ENCODE measurements at regions of chr20 and their contacts with region 1.

Region 1: GRCh38 chr20:49278036-49278817 is at the start of gene ZNFX1:
- DNase-seq: peak; percentile 100
- H3K4me3 ChIP-seq: peak within 1 kb of the TSS; percentile 76
- H3K4me3 Mint-ChIP-seq: peak within 1 kb of the TSS; percentile 81
- H3K27ac Mint-ChIP-seq: peak within 1 kb of the TSS; percentile 97
- H3K4me1 ChIP-seq: peaks cover 44% of the 10 kb centered on the region
- H3K4me1 Mint-ChIP-seq: peaks cover 56% of the 10 kb centered on the region
- H3K27me3 ChIP-seq: no peaks in the 10 kb centered on the region
- H3K27me3 Mint-ChIP-seq: peaks cover 9% of the 10 kb centered on the region
- CTCF ChIP-seq: no peak
- total RNA-seq, gene ZNFX1: 34.0 and 34.7 TPM in 2 replicates

Region 2: DNA sequence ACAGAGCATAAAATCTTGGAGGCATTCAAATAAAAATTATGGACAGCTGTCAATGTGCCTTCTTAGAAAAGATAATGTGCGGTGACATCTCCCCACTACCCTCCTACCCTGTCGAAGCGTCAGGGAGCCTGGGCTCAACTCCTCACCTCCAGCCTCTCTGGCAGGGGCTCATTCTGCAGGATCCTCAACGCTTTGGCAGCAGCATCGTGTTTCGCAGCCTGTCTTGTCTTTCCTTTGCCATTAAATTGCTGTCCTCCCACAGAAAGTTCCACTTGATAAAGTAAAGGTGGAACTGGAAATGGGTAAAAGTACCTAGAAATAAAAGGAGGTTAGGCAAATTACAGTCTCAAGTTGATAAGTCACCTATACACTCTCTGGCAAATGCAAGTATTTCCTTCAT is 126.8 kb before region 1 on chr20:
- CTCF ChIA-PET with region 1: no interaction called
- POLR2A ChIA-PET with region 1: interaction called, 10 read pairs
- intact Hi-C with region 1: no loop called
- DNase-seq: no peak
- H3K4me3 ChIP-seq: no peak overlapping the region
- H3K4me3 Mint-ChIP-seq: no peak overlapping the region
- H3K27ac Mint-ChIP-seq: no peak overlapping the region
- H3K4me1 ChIP-seq: no peaks in the 10 kb centered on the region
- H3K4me1 Mint-ChIP-seq: no peaks in the 10 kb centered on the region
- H3K27me3 ChIP-seq: no peaks in the 10 kb centered on the region
- H3K27me3 Mint-ChIP-seq: no peaks in the 10 kb centered on the region
- CTCF ChIP-seq: no peak

Region 3: GRCh38 chr20:49245921-49246740 is 32.1 kb before region 1 on chr20:
- CTCF ChIA-PET with region 1: interaction called, 4 read pairs
- POLR2A ChIA-PET with region 1: interaction called, 5 read pairs
- intact Hi-C with region 1: loop called (anchors 1 kb)
- DNase-seq: peak in 1 of 2 experiments; percentile 74
- H3K4me3 ChIP-seq: no peak overlapping the region
- H3K4me3 Mint-ChIP-seq: no peak overlapping the region
- H3K27ac Mint-ChIP-seq: no peak overlapping the region
- H3K4me1 ChIP-seq: no peaks in the 10 kb centered on the region
- H3K4me1 Mint-ChIP-seq: no peaks in the 10 kb centered on the region
- H3K27me3 ChIP-seq: no peaks in the 10 kb centered on the region
- H3K27me3 Mint-ChIP-seq: no peaks in the 10 kb centered on the region
- CTCF ChIP-seq: peak; percentile 97

Region 4: DNA sequence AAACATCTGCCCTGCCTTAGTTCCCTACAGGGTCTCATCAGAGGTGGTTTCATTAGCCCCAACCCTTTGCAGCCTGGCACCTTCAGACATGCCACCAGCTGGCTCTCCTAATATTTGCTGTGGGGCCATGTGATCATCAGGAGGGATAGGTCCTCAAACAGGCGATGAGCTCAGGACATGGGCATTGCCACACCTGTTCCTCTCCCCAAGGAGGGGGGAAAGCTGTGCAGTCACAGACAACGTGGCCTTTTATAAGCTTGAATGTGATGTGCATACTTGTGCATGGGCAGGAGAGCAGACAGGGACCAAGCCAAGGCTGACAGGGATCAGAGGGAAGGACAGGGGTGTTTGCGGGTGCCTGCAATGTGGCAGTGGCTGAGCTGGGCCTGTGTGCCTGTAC is 78.4 kb after region 1 on chr20:
- CTCF ChIA-PET with region 1: no interaction called
- POLR2A ChIA-PET with region 1: no interaction called
- intact Hi-C with region 1: no loop called
- DNase-seq: no peak
- H3K4me3 ChIP-seq: no peak overlapping the region
- H3K4me3 Mint-ChIP-seq: no peak overlapping the region
- H3K27ac Mint-ChIP-seq: no peak overlapping the region
- H3K4me1 ChIP-seq: peaks cover 6% of the 10 kb centered on the region
- H3K4me1 Mint-ChIP-seq: peaks cover 7% of the 10 kb centered on the region
- H3K27me3 ChIP-seq: peaks cover 1% of the 10 kb centered on the region
- H3K27me3 Mint-ChIP-seq: peaks cover 11% of the 10 kb centered on the region
- CTCF ChIP-seq: no peak

Region 5: GRCh38 chr20:49384437-49385088 is 106.3 kb after region 1 on chr20:
- CTCF ChIA-PET with region 1: no interaction called
- POLR2A ChIA-PET with region 1: no interaction called
- intact Hi-C with region 1: no loop called
- DNase-seq: peak; percentile 87 to 91
- H3K4me3 ChIP-seq: no peak overlapping the region
- H3K4me3 Mint-ChIP-seq: no peak overlapping the region
- H3K27ac Mint-ChIP-seq: no peak overlapping the region
- H3K4me1 ChIP-seq: no peaks in the 10 kb centered on the region
- H3K4me1 Mint-ChIP-seq: no peaks in the 10 kb centered on the region
- H3K27me3 ChIP-seq: no peaks in the 10 kb centered on the region
- H3K27me3 Mint-ChIP-seq: peaks cover 20% of the 10 kb centered on the region
- CTCF ChIP-seq: peak; percentile 93 to 96